OCI-LY7 (cell line): ENCODE measurements at regions of chr5 and their contacts with region 1.

Region 1: DNA sequence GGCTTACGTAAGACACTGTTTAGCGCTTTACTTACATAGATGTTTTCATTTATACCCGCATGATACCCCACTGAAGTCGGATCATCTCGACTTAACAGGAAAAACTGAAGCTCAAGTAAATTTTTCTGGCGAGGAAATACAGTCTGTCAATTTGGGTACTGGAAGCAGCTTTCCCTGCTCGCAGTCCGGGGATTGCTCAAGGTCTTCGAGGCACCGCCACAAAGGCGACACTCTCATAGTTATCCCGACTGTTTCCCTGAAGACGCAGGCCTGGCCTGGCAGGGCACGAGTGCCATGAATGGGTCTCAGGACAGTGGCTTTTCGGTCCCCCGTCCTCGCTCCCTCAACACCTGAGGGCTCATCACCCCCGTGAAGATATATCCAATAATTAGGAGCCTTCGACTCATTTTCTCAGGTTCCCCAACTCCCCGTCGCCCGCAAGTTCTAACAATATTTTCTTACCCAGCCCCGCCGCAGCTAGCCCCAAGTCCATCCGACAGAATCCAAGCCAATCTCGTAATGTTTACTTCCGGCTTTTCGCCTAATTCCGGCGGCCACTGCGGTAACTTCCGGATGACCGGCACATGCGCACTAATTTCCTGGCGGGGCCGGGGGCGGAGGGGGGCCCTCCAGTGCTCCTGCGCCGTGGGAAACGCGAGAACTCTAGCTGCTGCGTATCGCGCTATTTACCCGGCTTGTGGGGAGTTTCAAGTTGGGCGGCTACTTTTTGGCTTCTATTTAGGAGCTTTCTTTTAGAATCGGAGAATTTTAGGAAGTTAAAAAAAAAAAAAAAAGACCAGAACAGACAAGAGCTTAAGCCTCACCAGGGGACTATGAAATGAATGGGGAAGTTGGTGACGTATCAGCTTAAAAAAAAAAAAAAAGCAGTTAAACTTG is at the start of gene SLU7:
- DNase-seq: peak; percentile 95
- H3K4me3 ChIP-seq: peak within 1 kb of the TSS; percentile 88
- H3K27ac ChIP-seq: peak within 1 kb of the TSS; percentile 98
- H3K4me1 ChIP-seq: peaks cover 34% of the 10 kb centered on the region
- CTCF ChIP-seq: no peak
- total RNA-seq, gene SLU7: 32.2 and 59.7 TPM in 2 replicates

Region 2: GRCh38 chr5:159628703-159629102 is 790.1 kb before region 1 on chr5:
- CTCF ChIA-PET with region 1: no interaction called
- POLR2A ChIA-PET with region 1: no interaction called
- intact Hi-C with region 1: no loop called
- DNase-seq: no peak
- H3K4me3 ChIP-seq: no peak overlapping the region
- H3K27ac ChIP-seq: no peak overlapping the region
- H3K4me1 ChIP-seq: no peaks in the 10 kb centered on the region
- CTCF ChIP-seq: no peak

Region 3: GRCh38 chr5:160119142-160119904 is 299.5 kb before region 1 on chr5 and contains the start of gene PWWP2A:
- CTCF ChIA-PET with region 1: no interaction called
- POLR2A ChIA-PET with region 1: no interaction called
- intact Hi-C with region 1: loop called (anchors 2 kb)
- DNase-seq: peak; percentile 100
- H3K4me3 ChIP-seq: peak within 1 kb of the TSS; percentile 89
- H3K27ac ChIP-seq: peak within 1 kb of the TSS; percentile 69
- H3K4me1 ChIP-seq: peaks cover 15% of the 10 kb centered on the region
- CTCF ChIP-seq: 0 out of 2 replicates have a peak, but pooled peaks have one; percentile 29
- total RNA-seq, gene PWWP2A: 28.4 and 28.5 TPM in 2 replicates

Region 4: GRCh38 chr5:160399402-160400353 is 19.1 kb before region 1 on chr5 and contains the start of gene FAM200C:
- CTCF ChIA-PET with region 1: interaction called, 3 read pairs
- POLR2A ChIA-PET with region 1: interaction called, 10 read pairs
- intact Hi-C with region 1: loop called (anchors 2 kb)
- DNase-seq: peak; percentile 84
- H3K4me3 ChIP-seq: peak within 1 kb of the TSS; percentile 90
- H3K27ac ChIP-seq: peak within 1 kb of the TSS; percentile 21
- H3K4me1 ChIP-seq: peaks cover 9% of the 10 kb centered on the region
- CTCF ChIP-seq: no peak
- total RNA-seq, gene FAM200C: 2.4 and 2.7 TPM in 2 replicates

Region 5: DNA sequence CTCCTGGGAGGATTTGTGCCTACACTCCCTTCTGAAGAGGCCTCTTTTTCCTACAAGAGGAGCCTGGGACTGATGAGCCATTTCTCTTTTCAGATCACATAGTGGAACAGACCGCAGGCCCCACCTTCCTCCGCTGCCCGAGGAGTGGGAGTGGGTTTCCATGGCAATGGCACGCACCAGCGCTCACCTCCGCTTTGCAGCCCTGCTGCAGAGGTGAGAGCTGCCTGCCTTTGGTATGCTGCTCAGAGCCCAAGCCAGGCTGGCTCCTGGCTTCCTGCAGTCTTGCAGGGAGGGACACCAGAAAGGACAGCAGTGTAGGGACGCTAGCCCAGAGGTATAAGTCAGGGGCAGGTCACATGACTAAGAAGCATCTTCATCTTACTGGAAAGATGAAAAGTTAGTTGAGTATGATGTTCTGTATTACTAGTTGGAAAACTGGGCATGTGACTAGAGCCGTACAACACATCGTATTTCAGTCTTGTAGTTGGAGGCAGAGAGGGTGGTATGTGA is 15.3 kb after region 1 on chr5:
- CTCF ChIA-PET with region 1: no interaction called
- POLR2A ChIA-PET with region 1: interaction called, 13 read pairs
- intact Hi-C with region 1: no loop called
- DNase-seq: peak; percentile 71
- H3K4me3 ChIP-seq: peak overlapping the region; percentile 13
- H3K27ac ChIP-seq: no peak overlapping the region
- H3K4me1 ChIP-seq: peaks cover 50% of the 10 kb centered on the region
- CTCF ChIP-seq: no peak

Region 6: GRCh38 chr5:160467555-160468362 is 49.0 kb after region 1 on chr5:
- CTCF ChIA-PET with region 1: interaction called, 3 read pairs
- POLR2A ChIA-PET with region 1: interaction called, 26 read pairs
- intact Hi-C with region 1: loop called (anchors 1 kb)
- DNase-seq: peak; percentile 83
- H3K4me3 ChIP-seq: peak overlapping the region; percentile 68
- H3K27ac ChIP-seq: peak overlapping the region; percentile 72
- H3K4me1 ChIP-seq: peaks cover 81% of the 10 kb centered on the region
- CTCF ChIP-seq: no peak

Region 7: GRCh38 chr5:161138751-161139455 is 720.1 kb after region 1 on chr5:
- CTCF ChIA-PET with region 1: no interaction called
- POLR2A ChIA-PET with region 1: no interaction called
- intact Hi-C with region 1: loop called (anchors 10 kb)
- DNase-seq: peak; percentile 62
- H3K4me3 ChIP-seq: peak overlapping the region; percentile 36
- H3K27ac ChIP-seq: peak overlapping the region; percentile 85
- H3K4me1 ChIP-seq: peaks cover 56% of the 10 kb centered on the region
- CTCF ChIP-seq: no peak